H1 (cell line): ENCODE measurements at regions of chr10 and their contacts with region 1.

Region 1: GRCh38 chr10:96470116-96470743 is 43.5 kb downstream of the TLL2 start:
- DNase-seq: peak in 1 of 2 experiments; percentile 84
- H3K4me3 ChIP-seq: no peak overlapping the region
- H3K27ac ChIP-seq: no peak overlapping the region
- H3K4me1 ChIP-seq: peaks cover 2 to 6% (median 4%) of the 10 kb centered on the region in 4 experiments; a peak in 4 of 7 replicates
- H3K27me3 ChIP-seq: no peaks in the 10 kb centered on the region
- CTCF ChIP-seq: peak; percentile 82 to 94 (median 94)
- EP300 ChIP-seq: no peak
- POLR2A ChIP-seq: no peak
- RAD21 ChIP-seq: peak; percentile 56 to 76

Region 2: GRCh38 chr10:96395931-96396877 is 74.0 kb before region 1 on chr10:
- CTCF ChIA-PET with region 1: interaction called, 33 read pairs
- POLR2A ChIA-PET with region 1: no interaction called
- DNase-seq: peak; percentile 56 to 79
- H3K4me3 ChIP-seq: peak overlapping the region; percentile 10 to 49 (median 22); a peak in 4 of 8 replicates
- H3K27ac ChIP-seq: no peak overlapping the region
- H3K4me1 ChIP-seq: peaks cover 0 to 6% (median 2%) of the 10 kb centered on the region in 4 experiments; a peak in 6 of 7 replicates
- H3K27me3 ChIP-seq: no peaks in the 10 kb centered on the region; a peak in 2 of 7 replicates
- CTCF ChIP-seq: peak; percentile 88 to 91 (median 89)
- EP300 ChIP-seq: no peak
- POLR2A ChIP-seq: no peak
- RAD21 ChIP-seq: peak; percentile 91 to 92

Region 3: DNA sequence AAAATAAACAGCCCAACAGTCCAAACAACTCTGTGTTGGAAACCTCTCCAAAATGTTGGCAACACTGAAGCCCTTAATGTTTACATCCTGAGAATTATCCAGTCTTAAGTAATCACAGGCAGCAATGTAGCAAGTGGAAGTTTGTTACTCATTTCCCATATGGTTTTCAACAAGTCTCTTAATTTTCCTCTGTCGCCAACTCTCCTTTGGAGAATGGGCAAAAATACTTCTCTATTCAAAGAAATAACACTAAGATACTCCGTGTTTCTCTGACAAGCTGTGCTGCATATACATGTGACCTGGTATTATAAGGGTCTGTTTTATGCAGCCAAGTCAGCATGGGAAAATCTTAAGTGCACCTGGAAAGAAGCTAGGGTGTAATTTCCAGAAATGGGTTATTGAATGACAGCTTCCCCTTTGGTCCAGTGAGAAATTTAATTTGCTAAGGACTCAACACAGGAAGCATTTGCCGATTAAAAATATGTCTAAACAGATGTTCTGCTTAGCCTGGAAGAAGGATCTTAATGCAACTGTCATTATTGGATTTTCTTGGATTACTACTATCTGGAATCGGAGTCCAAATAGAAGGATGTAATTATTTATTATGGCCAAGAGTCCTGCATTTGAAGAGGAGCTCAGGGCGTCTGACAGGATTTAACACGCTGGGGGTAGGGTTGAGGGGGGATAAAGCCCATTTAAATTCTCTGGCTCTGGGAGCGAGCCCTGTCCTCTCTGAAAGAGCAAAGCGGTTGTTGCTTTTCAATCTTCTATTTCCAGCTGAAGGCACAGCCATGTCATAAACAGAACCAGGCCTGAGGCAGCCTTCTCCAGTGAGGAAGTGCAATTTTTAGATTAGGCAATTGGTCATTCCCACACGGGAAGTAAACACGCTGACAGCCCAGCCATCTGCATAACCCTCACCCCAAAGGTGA is 29.6 kb before region 1 on chr10:
- CTCF ChIA-PET with region 1: interaction called, 22 read pairs
- POLR2A ChIA-PET with region 1: no interaction called
- DNase-seq: no peak
- H3K4me3 ChIP-seq: no peak overlapping the region
- H3K27ac ChIP-seq: no peak overlapping the region
- H3K4me1 ChIP-seq: peaks cover 10 to 16% (median 13%) of the 10 kb centered on the region in 4 experiments
- H3K27me3 ChIP-seq: no peaks in the 10 kb centered on the region
- CTCF ChIP-seq: no peak
- EP300 ChIP-seq: no peak
- POLR2A ChIP-seq: no peak
- RAD21 ChIP-seq: no peak

Region 4: GRCh38 chr10:96491299-96491698 is 21.1 kb after region 1 on chr10:
- CTCF ChIA-PET with region 1: interaction called, 32 read pairs
- POLR2A ChIA-PET with region 1: interaction called, 3 read pairs
- DNase-seq: no peak
- H3K4me3 ChIP-seq: no peak overlapping the region
- H3K27ac ChIP-seq: no peak overlapping the region
- H3K4me1 ChIP-seq: no peaks in the 10 kb centered on the region
- H3K27me3 ChIP-seq: no peaks in the 10 kb centered on the region
- CTCF ChIP-seq: peak; percentile 31 to 58 (median 56)
- EP300 ChIP-seq: no peak
- POLR2A ChIP-seq: no peak
- RAD21 ChIP-seq: peak; percentile 76 to 79

Region 5: GRCh38 chr10:96614515-96614914 is 144.3 kb after region 1 on chr10:
- CTCF ChIA-PET with region 1: no interaction called
- POLR2A ChIA-PET with region 1: no interaction called
- DNase-seq: no peak
- H3K4me3 ChIP-seq: no peak overlapping the region
- H3K27ac ChIP-seq: no peak overlapping the region
- H3K4me1 ChIP-seq: peaks cover 0 to 4% (median 0%) of the 10 kb centered on the region in 4 experiments; a peak in 2 of 7 replicates
- H3K27me3 ChIP-seq: no peaks in the 10 kb centered on the region
- CTCF ChIP-seq: no peak
- EP300 ChIP-seq: no peak
- POLR2A ChIP-seq: no peak
- RAD21 ChIP-seq: no peak

Region 6: GRCh38 chr10:96960872-96961271 is 490.6 kb after region 1 on chr10:
- CTCF ChIA-PET with region 1: no interaction called
- POLR2A ChIA-PET with region 1: no interaction called
- DNase-seq: no peak
- H3K4me3 ChIP-seq: no peak overlapping the region
- H3K27ac ChIP-seq: no peak overlapping the region
- H3K4me1 ChIP-seq: no peaks in the 10 kb centered on the region
- H3K27me3 ChIP-seq: no peaks in the 10 kb centered on the region
- CTCF ChIP-seq: no peak
- EP300 ChIP-seq: no peak
- POLR2A ChIP-seq: no peak
- RAD21 ChIP-seq: no peak